K562 (cell line): ENCODE measurements at regions of chr6 and their contacts with region 1.

Region 1: GRCh38 chr6:122709922-122710512 is 69.5 kb upstream of the FABP7 start:
- DNase-seq: peak in 1 of 4 experiments; percentile 41
- ATAC-seq: peak; percentile 9; the same call in 2 of the 3 replicates
- H3K4me3 ChIP-seq: no peak overlapping the region
- H3K27ac ChIP-seq: peak overlapping the region; percentile 74
- H3K4me1 ChIP-seq: peaks cover 9 to 43% of the 10 kb centered on the region in 2 experiments; a peak in 3 of 5 replicates
- H3K27me3 ChIP-seq: no peaks in the 10 kb centered on the region
- CTCF ChIP-seq: no peak
- EP300 ChIP-seq: no peak
- POLR2A ChIP-seq: no peak
- RAD21 ChIP-seq: no peak

Region 2: GRCh38 chr6:122399384-122400158 is 310.4 kb before region 1 on chr6 and contains the start of gene HSF2:
- CTCF ChIA-PET with region 1: no interaction called
- POLR2A ChIA-PET with region 1: no interaction called
- in situ Hi-C with region 1: no loop called
- intact Hi-C with region 1: loop called (anchors 5 kb)
- DNase-seq: peak; percentile 94 to 98 (median 96)
- ATAC-seq: peak; percentile 98
- H3K4me3 ChIP-seq: peak within 1 kb of the TSS; percentile 89
- H3K27ac ChIP-seq: peak within 1 kb of the TSS; percentile 90
- H3K4me1 ChIP-seq: peaks cover 10 to 11% of the 10 kb centered on the region in 2 experiments; a peak in 3 of 5 replicates
- H3K27me3 ChIP-seq: no peaks in the 10 kb centered on the region
- CTCF ChIP-seq: peak in 2 of 3 experiments; percentile 31 to 37; a peak in 3 of 6 replicates
- EP300 ChIP-seq: no peak
- POLR2A ChIP-seq: peak; percentile 75
- RAD21 ChIP-seq: no peak
- polyA plus RNA-seq, gene HSF2: 27.2 to 39.0 TPM

Region 3: DNA sequence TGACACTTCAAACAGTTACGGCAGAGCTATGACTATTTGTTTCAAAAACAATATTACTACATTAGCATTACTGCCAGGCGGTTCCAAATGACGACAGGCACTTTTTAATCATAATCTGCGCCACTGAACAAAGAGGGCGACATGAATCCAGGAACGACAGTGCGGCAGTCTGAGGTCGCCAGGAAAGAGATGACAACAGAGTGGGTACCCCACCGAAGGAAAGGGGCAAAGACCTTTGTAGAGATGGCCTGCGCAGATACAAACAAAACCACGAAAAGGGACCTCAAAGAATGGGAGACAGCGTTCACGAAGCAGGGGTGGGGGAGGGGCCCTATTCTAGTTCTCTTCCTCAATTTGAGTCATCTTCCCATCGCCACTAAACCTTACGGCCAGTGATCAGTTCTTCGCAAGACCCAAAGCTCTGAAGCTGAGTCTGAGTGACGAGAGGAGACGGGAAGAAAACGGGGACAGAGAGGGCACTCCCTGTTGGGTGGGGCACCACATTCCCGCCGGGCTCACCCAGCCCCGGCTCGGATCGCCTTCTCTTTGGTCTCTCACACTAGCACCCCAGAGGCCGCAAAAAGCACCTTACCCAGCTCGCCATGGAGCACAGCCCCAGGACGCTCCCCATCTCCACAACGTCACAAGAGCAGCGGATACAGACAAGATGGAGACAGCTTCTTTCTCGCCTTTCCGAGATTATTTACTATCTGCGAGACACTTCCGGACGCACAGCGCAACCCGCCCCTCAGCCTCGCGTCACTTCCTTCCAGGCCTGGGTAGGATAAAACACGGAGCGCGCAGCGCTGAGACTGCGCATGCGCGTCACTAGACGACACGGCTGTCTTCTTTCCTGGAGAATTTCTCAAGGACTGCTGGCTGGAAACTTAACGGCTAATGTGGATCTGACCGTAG is 238.7 kb before region 1 on chr6 and contains the start of gene SERINC1:
- CTCF ChIA-PET with region 1: no interaction called
- POLR2A ChIA-PET with region 1: no interaction called
- in situ Hi-C with region 1: no loop called
- intact Hi-C with region 1: loop called (anchors 5 kb)
- DNase-seq: peak; percentile 91 to 97 (median 92)
- ATAC-seq: peak; percentile 96
- H3K4me3 ChIP-seq: peak within 1 kb of the TSS; percentile 60
- H3K27ac ChIP-seq: peak within 1 kb of the TSS; percentile 87
- H3K4me1 ChIP-seq: peaks cover 0 to 6% of the 10 kb centered on the region in 2 experiments; a peak in 2 of 5 replicates
- H3K27me3 ChIP-seq: no peaks in the 10 kb centered on the region
- CTCF ChIP-seq: no peak
- EP300 ChIP-seq: no peak
- POLR2A ChIP-seq: peak; percentile 92
- RAD21 ChIP-seq: no peak
- polyA plus RNA-seq, gene SERINC1: 33.2 to 37.3 TPM

Region 4: GRCh38 chr6:122726649-122727048 is 16.6 kb after region 1 on chr6:
- CTCF ChIA-PET with region 1: no interaction called
- POLR2A ChIA-PET with region 1: no interaction called
- in situ Hi-C with region 1: no loop called
- intact Hi-C with region 1: no loop called
- DNase-seq: peak in 3 of 4 experiments; percentile 18 to 50 (median 28)
- ATAC-seq: peak; percentile 86
- H3K4me3 ChIP-seq: no peak overlapping the region
- H3K27ac ChIP-seq: no peak overlapping the region
- H3K4me1 ChIP-seq: no peaks in the 10 kb centered on the region
- H3K27me3 ChIP-seq: no peaks in the 10 kb centered on the region
- CTCF ChIP-seq: peak; percentile 47 to 54 (median 51); a peak in 5 of 6 replicates
- EP300 ChIP-seq: no peak
- POLR2A ChIP-seq: no peak
- RAD21 ChIP-seq: peak in 1 of 2 experiments; percentile 52; a peak in 3 of 4 replicates

Region 5: DNA sequence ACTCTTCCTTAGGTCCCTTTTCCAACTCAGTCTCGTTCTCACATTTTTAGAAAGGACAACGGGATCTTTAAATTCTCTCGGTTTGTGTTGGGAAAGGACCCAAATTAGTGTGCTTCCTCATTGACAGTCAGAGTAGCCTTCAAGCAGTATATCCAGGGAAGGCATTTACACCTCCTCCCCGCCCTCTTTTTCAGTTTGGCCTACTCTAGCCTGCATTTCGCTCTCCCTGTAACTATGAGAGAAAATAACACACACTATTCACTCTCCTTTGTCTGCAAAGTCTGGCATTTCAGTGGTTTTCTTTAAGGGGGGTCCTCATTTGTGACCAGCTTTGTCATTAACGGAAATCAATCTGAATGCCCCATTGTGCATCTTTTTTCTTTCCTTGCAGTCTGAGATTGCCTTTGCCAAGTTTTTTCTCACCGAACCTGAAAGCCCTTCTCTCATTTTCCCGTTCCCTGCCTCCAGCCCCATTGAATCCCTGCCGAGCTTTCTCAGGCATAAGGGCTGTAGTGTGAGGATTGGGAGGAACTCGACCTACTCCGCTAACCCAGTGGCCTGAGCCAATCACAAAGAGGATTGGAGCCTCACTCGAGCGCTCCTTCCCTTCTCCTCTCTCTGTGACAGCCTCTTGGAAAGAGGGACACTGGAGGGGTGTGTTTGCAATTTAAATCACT is 69.1 kb after region 1 on chr6:
- CTCF ChIA-PET with region 1: no interaction called
- POLR2A ChIA-PET with region 1: no interaction called
- in situ Hi-C with region 1: no loop called
- intact Hi-C with region 1: no loop called
- DNase-seq: no peak
- ATAC-seq: no peak; the same call in 2 of the 3 replicates
- H3K4me3 ChIP-seq: no peak overlapping the region
- H3K27ac ChIP-seq: no peak overlapping the region
- H3K4me1 ChIP-seq: no peaks in the 10 kb centered on the region
- H3K27me3 ChIP-seq: peaks cover 0 to 8% of the 10 kb centered on the region in 2 experiments; a peak in 2 of 5 replicates
- CTCF ChIP-seq: no peak
- EP300 ChIP-seq: no peak
- POLR2A ChIP-seq: no peak
- RAD21 ChIP-seq: no peak